Activated T-helper 1 cell treated with anti-CD3 and anti-CD28 coated beads, Interleukin-12 subunit alpha, Interleukin-12 subunit beta, Interleukin-2, Interleukin-4 antibody, amounts not matched to agents 30 ng/mL and 10 ng/mL and 1 ng/mL, durations not matched to agents 14 hours and 24 hours and 36 hours (primary cell): ENCODE measurements at regions of chr4 and their contacts with region 1.

Region 1: GRCh38 chr4:337143-337931 is at the start of gene ZNF141:
- DNase-seq: peak; percentile 90
- H3K4me3 Mint-ChIP-seq: peak within 1 kb of the TSS; percentile 99
- H3K27ac Mint-ChIP-seq: peak within 1 kb of the TSS; percentile 98
- H3K4me1 Mint-ChIP-seq: peaks cover 25% of the 10 kb centered on the region
- H3K27me3 Mint-ChIP-seq: peaks cover 3% of the 10 kb centered on the region
- total RNA-seq, gene ZNF141: 23.4 and 23.7 TPM in 2 replicates

Region 2: GRCh38 chr4:124275-125081 is 212.9 kb before region 1 on chr4 and contains the start of gene ZNF718:
- intact Hi-C with region 1: loop called (anchors 1 kb)
- DNase-seq: peak; percentile 91
- H3K4me3 Mint-ChIP-seq: peak within 1 kb of the TSS; percentile 96
- H3K27ac Mint-ChIP-seq: peak within 1 kb of the TSS; percentile 99
- H3K4me1 Mint-ChIP-seq: peaks cover 33% of the 10 kb centered on the region
- H3K27me3 Mint-ChIP-seq: no peaks in the 10 kb centered on the region
- total RNA-seq, gene ZNF718: 7.3 and 7.7 TPM in 2 replicates

Region 3: DNA sequence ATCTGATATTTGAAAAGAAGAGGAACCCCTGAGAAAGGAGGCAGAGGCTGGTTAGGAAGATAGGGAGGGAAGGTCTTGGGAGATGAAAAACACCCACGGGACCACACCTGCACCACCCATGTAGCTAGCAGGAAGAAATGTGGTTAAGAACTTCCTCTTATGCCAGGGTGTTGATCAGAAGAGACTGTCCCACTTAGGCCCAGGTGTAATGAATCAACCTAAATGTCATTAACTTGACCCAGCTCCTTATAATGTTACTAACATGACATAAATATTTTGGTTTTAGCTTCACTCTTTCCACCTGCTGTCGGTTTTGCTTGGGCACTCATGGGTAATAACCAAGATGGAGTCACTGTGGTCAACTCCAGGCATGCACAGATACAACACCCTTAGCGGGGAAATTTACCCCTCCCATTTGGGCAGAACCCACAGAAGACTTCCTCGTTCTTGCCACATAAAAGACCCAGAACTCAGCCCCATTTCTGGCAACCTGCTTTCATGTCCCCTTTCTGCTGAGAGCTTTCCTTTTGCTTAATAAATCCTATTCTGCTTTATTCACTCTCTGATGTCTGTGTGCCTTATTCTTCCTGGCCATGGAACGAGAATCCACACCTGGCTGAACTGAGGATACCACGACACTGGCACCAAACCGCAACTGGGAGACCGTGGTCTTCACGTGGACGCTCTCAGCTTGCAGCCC is 47.1 kb after region 1 on chr4:
- intact Hi-C with region 1: loop called (anchors 5 kb)
- DNase-seq: no peak
- H3K4me3 Mint-ChIP-seq: no peak overlapping the region
- H3K27ac Mint-ChIP-seq: no peak overlapping the region
- H3K4me1 Mint-ChIP-seq: peaks cover 10% of the 10 kb centered on the region
- H3K27me3 Mint-ChIP-seq: no peaks in the 10 kb centered on the region

Region 4: GRCh38 chr4:473570-474457 is 136.5 kb after region 1 on chr4:
- intact Hi-C with region 1: loop called (anchors 1 kb)
- DNase-seq: peak; percentile 94
- H3K4me3 Mint-ChIP-seq: peak overlapping the region; percentile 99
- H3K27ac Mint-ChIP-seq: peak overlapping the region; percentile 95
- H3K4me1 Mint-ChIP-seq: peaks cover 26% of the 10 kb centered on the region
- H3K27me3 Mint-ChIP-seq: no peaks in the 10 kb centered on the region

Region 5: DNA sequence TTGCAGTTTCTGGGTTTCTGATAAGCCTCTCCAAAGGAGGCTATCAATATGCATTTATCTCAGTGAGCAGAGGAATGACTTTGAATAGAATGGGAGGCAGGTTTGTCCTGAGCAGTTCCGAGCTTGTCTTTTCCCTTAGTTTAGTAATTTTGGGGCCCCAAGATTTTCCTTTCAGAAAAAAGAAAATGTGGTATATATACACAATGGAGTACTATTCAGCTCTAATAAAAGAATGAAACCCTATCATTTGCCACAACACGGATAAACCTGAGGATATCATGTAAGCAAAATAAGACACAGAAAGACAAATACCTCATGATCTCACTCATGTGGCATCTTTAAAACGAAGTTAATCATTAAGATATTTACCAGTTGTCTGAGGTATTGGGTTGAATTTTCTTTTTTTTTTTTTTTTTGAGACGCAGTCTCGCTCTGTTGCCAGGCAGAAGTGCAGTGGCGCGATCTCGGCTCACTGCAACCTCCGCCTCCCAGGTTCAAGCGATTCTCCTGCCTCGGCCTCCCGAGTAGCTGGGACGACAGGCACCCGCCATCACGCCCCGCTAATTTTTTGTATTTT is 161.1 kb after region 1 on chr4:
- intact Hi-C with region 1: loop called (anchors 1 kb)
- DNase-seq: no peak
- H3K4me3 Mint-ChIP-seq: peak overlapping the region; percentile 97
- H3K27ac Mint-ChIP-seq: peak overlapping the region; percentile 96
- H3K4me1 Mint-ChIP-seq: peaks cover 32% of the 10 kb centered on the region
- H3K27me3 Mint-ChIP-seq: no peaks in the 10 kb centered on the region

Region 6: GRCh38 chr4:532588-533317 is 195.4 kb after region 1 on chr4:
- intact Hi-C with region 1: no loop called
- DNase-seq: no peak
- H3K4me3 Mint-ChIP-seq: no peak overlapping the region
- H3K27ac Mint-ChIP-seq: no peak overlapping the region
- H3K4me1 Mint-ChIP-seq: no peaks in the 10 kb centered on the region
- H3K27me3 Mint-ChIP-seq: no peaks in the 10 kb centered on the region